ENCODE measurements at regions of chr5 and their contacts with region 1.

Region 1: DNA sequence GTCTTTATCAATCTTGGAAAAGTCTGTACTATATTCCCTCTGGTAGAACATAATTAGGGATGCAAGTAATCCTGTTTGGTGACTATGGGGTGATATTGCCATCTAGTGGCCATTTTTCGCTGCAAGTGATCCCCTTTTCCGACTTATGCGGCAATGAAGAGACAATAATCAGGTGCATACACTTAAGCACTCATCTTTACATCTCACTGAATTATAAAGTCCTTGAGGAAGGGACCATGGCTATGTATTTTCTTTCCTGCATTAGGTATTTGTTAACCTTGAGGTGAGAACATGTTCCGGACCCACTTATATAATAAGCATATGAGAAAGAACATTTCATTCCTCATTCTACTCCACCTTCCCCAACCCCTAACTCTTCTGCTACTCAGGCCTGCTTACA is 19.6 kb upstream of the LIX1 start:
- DNase-seq: peak; percentile 64
- ATAC-seq: peak; percentile 61
- H3K4me3 Mint-ChIP-seq: no peak overlapping the region
- H3K27ac Mint-ChIP-seq: no peak overlapping the region
- H3K4me1 Mint-ChIP-seq: peaks cover 20% of the 10 kb centered on the region
- H3K27me3 Mint-ChIP-seq: no peaks in the 10 kb centered on the region

Region 2: GRCh38 chr5:96997265-96997859 is 164.7 kb before region 1 on chr5:
- CTCF ChIA-PET with region 1: interaction called, 12 read pairs
- DNase-seq: no peak
- ATAC-seq: peak; percentile 73
- H3K4me3 Mint-ChIP-seq: no peak overlapping the region
- H3K27ac Mint-ChIP-seq: no peak overlapping the region
- H3K4me1 Mint-ChIP-seq: peaks cover 34% of the 10 kb centered on the region
- H3K27me3 Mint-ChIP-seq: no peaks in the 10 kb centered on the region

Region 3: GRCh38 chr5:97111616-97112015 is 50.4 kb before region 1 on chr5:
- CTCF ChIA-PET with region 1: no interaction called
- DNase-seq: no peak
- ATAC-seq: no peak
- H3K4me3 Mint-ChIP-seq: no peak overlapping the region
- H3K27ac Mint-ChIP-seq: no peak overlapping the region
- H3K4me1 Mint-ChIP-seq: no peaks in the 10 kb centered on the region
- H3K27me3 Mint-ChIP-seq: peaks cover 3% of the 10 kb centered on the region

Region 4: DNA sequence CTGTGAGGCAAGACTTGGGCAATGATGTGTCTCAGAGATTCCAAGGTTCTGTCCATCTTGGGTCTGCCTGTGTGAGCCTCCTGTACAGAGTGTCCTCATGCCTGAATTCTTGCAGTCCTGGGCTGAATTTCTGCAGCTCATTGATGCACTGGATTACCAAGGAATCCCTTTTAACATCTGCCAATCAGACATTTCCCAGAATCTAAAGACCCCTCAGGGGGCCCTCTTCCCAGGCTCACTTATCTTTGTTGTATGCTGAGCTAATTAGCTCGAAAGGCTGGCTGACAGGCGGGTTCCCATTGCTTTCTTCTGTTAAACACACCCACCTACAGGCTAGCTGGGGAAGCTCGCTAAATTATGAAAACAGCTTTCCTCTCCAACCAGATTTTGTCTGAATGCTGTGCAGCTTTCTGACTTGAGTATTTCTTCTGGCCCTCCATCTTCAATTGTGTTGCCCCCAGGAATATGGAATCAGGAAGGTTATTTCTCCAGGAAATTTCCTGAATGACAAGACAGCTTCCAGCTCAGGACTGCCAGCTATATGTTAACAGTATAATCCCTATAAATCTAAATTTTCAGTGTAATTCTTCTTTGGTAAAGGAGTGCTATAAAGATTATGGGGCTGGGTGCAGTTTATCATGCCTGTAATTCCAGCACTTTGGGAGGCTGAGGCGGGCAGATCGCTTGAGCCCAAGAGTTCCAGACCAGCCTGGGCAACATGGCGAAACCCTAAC is 19.4 kb before region 1 on chr5 and contains the start of gene LIX1:
- CTCF ChIA-PET with region 1: interaction called, 34 read pairs
- DNase-seq: peak; percentile 62
- ATAC-seq: peak; percentile 87
- H3K4me3 Mint-ChIP-seq: no peak within 1 kb of the TSS
- H3K27ac Mint-ChIP-seq: no peak within 1 kb of the TSS
- H3K4me1 Mint-ChIP-seq: no peaks in the 10 kb centered on the region
- H3K27me3 Mint-ChIP-seq: peaks cover 24% of the 10 kb centered on the region
- total RNA-seq, gene LIX1: not detected

Region 5: GRCh38 chr5:97151370-97151769 is 10.7 kb before region 1 on chr5:
- CTCF ChIA-PET with region 1: interaction called, 10 read pairs
- DNase-seq: no peak
- ATAC-seq: no peak
- H3K4me3 Mint-ChIP-seq: no peak overlapping the region
- H3K27ac Mint-ChIP-seq: no peak overlapping the region
- H3K4me1 Mint-ChIP-seq: peaks cover 3% of the 10 kb centered on the region
- H3K27me3 Mint-ChIP-seq: peaks cover 8% of the 10 kb centered on the region

Region 6: GRCh38 chr5:97181856-97182545 is 20.0 kb after region 1 on chr5:
- CTCF ChIA-PET with region 1: interaction called, 12 read pairs
- DNase-seq: no peak
- ATAC-seq: no peak
- H3K4me3 Mint-ChIP-seq: peak overlapping the region; percentile 95
- H3K27ac Mint-ChIP-seq: peak overlapping the region; percentile 98
- H3K4me1 Mint-ChIP-seq: peaks cover 36% of the 10 kb centered on the region
- H3K27me3 Mint-ChIP-seq: no peaks in the 10 kb centered on the region

Region 7: GRCh38 chr5:97231025-97231636 is 69.1 kb after region 1 on chr5:
- CTCF ChIA-PET with region 1: no interaction called
- DNase-seq: no peak
- ATAC-seq: peak; percentile 72
- H3K4me3 Mint-ChIP-seq: no peak overlapping the region
- H3K27ac Mint-ChIP-seq: no peak overlapping the region
- H3K4me1 Mint-ChIP-seq: peaks cover 1% of the 10 kb centered on the region
- H3K27me3 Mint-ChIP-seq: peaks cover 5% of the 10 kb centered on the region

Measured in activated CD8-positive, alpha-beta memory T cell treated with anti-CD3 and anti-CD28 coated beads, Interleukin-2, amount 10 ng/mL, durations not matched to agents 7 days and 5 days (primary cell).